ENCODE measurements at regions of chr6 and their contacts with region 1.

Region 1: DNA sequence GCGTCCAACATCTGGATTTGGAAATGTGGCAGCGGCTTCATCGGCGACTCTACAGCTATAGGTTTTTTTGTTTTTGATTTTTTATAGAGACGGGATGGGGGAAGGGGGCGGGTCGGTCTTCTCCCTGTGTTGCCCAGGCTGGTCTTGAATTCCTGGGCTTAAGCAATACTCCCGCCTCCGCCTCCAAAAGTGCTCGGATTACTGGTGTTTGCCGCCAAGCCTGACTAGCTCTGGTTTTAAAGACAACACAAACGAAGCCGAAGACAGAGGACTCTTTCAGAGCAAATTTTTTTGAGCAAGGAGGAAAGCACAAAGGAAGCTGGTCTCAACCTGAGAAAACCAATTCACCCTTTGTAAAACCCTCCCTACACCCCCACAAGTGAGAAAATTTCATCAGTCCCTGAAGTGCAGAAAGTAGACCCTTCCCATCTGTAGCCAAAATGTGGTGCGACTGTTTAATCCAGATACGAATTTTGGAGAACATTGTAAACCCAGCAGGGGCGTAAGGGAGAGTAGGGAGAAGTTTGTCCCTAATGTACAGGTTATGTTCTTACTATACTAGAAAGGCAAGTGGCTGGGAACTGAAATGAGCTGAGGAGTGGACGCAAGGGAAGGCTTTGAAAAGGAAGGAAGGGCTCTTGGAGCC is 185.9 kb downstream of the TRIM27 start:
- DNase-seq: no peak
- H3K4me3 Mint-ChIP-seq: no peak overlapping the region
- H3K27ac Mint-ChIP-seq: no peak overlapping the region
- H3K4me1 Mint-ChIP-seq: peaks cover 5% of the 10 kb centered on the region
- H3K27me3 Mint-ChIP-seq: peaks cover 64% of the 10 kb centered on the region

Region 2: DNA sequence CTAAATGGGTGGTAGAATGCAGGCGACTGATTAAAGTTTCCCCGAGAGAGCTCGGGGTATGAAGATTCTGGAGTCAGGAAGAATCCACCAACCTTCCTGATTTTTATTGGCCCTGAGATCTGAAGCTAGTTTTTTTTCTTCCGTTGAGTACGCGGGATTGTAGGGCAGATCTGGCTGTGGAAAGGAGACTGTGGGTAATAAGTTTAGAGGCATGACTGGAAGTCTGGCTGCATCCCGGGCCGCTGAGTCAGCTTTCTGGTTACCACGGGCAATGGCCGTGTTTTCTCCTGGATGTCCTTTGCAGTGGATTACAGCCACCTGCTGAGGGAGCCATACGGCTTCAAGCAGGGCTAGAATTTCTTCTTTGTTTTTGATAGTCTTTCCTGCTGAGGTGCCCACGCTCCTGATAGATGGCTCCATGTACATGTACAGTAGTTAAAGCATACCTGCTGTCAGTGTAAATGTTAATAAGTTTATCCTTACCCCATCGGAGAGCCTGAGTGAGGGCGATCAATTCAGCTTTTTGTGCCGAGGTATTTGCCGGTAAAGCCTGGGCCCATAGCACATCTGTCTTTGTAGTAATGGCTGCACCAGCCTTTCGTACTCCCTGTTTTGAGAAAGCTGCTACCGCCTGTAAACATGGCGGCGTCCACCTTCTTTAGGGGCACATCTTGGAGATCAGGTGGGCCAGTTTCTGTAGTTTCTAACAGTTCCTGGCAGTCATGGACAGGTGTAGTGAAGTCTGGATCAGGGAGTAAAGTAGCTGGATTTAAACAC is 31.9 kb after region 1 on chr6:
- intact Hi-C with region 1: loop called (anchors 2 kb)
- DNase-seq: no peak
- H3K4me3 Mint-ChIP-seq: no peak overlapping the region
- H3K27ac Mint-ChIP-seq: no peak overlapping the region
- H3K4me1 Mint-ChIP-seq: peaks cover 5% of the 10 kb centered on the region
- H3K27me3 Mint-ChIP-seq: peaks cover 90% of the 10 kb centered on the region